Transverse colon (tissue), 4 donors: ENCODE measurements at regions of chr4 and their contacts with region 1.

Region 1: GRCh38 chr4:142265536-142265935 is 580.6 kb downstream of the INPP4B start:
- DNase-seq: no peak
- H3K4me3 ChIP-seq: no peak overlapping the region
- H3K27ac ChIP-seq: no peak overlapping the region
- H3K4me1 ChIP-seq: peaks cover 0 to 5% (median 0%) of the 10 kb centered on the region in 4 donors
- H3K27me3 ChIP-seq: no peaks in the 10 kb centered on the region
- CTCF ChIP-seq: no peak
- EP300 ChIP-seq: no peak
- POLR2A ChIP-seq: no peak

Region 2: DNA sequence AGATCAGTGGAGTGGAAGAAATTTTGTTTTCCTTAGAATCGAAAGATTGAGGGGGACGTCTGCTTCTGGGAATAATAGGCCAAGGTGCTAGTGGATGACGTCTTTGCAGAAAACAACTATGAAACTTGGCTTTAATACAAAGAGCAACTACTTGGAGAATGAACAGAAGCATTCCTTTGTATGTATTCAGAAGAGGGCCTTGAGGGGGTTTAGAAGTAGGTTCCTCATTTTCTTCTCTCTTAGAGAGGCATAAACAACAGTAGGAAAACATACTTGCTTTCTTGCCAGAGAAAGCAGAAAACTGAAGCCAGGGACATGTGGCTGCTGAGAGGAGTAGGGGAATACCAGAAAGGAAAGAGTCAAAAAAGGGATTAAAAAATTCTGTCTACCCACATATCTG is 877.1 kb before region 1 on chr4:
- in situ Hi-C with region 1: no loop called
- intact Hi-C with region 1: no loop called
- DNase-seq: no peak
- H3K4me3 ChIP-seq: no peak overlapping the region
- H3K27ac ChIP-seq: peak overlapping the region in 2 of 4 donors; percentile 3 to 31
- H3K4me1 ChIP-seq: no peaks in the 10 kb centered on the region
- H3K27me3 ChIP-seq: no peaks in the 10 kb centered on the region
- CTCF ChIP-seq: no peak
- EP300 ChIP-seq: peak; percentile 12
- POLR2A ChIP-seq: no peak

Region 3: GRCh38 chr4:142222127-142222526 is 43.4 kb before region 1 on chr4:
- in situ Hi-C with region 1: no loop called
- intact Hi-C with region 1: no loop called
- DNase-seq: no peak
- H3K4me3 ChIP-seq: no peak overlapping the region
- H3K27ac ChIP-seq: no peak overlapping the region
- H3K4me1 ChIP-seq: peaks cover 0 to 13% (median 3%) of the 10 kb centered on the region in 4 donors
- H3K27me3 ChIP-seq: no peaks in the 10 kb centered on the region
- CTCF ChIP-seq: no peak
- EP300 ChIP-seq: no peak
- POLR2A ChIP-seq: no peak

Region 4: DNA sequence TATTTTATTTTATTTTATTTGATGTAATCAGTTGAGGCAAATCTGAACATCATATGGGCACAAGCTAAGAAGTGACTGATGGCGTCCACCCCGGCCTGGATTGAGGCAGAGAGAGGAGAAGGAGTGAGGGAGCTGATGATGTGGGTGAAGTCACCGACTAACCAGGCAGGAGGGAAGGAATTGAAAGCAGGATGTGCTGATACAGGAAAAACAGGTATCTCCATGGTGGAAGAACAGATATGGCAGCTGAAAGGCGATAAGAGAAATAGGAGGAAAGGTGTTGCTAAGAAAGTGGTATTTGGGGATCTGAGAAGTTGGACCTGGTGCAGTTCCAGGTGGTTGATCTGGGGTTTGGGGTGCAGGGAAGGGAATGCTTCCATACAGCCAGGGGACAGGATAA is 1791.3 kb after region 1 on chr4:
- in situ Hi-C with region 1: no loop called
- intact Hi-C with region 1: loop called (anchors 10 kb)
- DNase-seq: no peak
- H3K4me3 ChIP-seq: no peak overlapping the region
- H3K27ac ChIP-seq: no peak overlapping the region
- H3K4me1 ChIP-seq: no peaks in the 10 kb centered on the region
- H3K27me3 ChIP-seq: no peaks in the 10 kb centered on the region
- CTCF ChIP-seq: no peak
- EP300 ChIP-seq: no peak
- POLR2A ChIP-seq: no peak